ENCODE measurements at regions of chr18 and their contacts with region 1.

Region 1: DNA sequence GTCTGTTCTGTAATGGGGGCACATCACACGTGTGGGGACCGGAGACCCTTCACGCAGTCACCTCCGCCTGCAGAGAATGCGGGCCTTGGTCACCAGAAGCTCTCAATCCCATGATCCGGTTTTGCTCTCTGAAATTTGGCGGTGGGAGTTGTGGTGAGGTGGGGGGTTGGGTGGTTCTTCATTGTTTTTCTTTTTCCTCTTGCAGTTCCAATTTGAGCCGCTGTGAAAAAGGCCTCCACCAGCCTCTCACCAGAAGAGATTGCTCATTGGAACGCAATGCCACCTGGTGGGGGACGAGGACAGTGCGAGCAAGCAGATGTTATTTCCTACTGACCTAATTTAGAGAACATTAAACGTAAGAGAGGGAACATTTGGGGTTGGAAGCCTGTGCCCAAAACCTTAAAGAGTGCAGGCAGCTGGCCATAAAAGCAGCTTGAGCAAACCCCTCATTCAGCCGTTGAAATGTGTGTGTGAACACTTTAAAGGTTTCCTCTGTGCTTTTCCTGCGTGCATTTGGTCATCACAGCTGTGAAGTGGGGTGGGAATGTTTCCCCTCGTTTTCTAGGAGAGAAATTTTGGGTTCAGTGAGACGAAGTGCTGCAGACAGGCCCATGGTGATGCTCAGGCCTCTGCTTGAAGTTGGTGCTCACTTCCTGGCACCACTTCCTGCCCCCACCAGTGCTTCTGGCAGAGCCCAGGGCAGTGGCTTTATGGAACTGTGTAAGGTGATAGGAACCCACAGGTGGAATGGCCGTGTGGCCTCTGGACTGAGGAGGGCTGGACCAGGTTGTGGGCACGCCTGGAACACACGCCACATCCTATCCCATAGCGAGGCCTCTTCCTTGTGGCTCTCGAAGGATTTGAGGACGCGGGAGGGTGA is 61.7 kb downstream of the ZCCHC2 start:
- DNase-seq: peak; percentile 88
- H3K4me3 Mint-ChIP-seq: no peak overlapping the region
- H3K27ac Mint-ChIP-seq: peak overlapping the region; percentile 65
- H3K4me1 Mint-ChIP-seq: peaks cover 8% of the 10 kb centered on the region
- H3K27me3 Mint-ChIP-seq: no peaks in the 10 kb centered on the region
- CTCF ChIP-seq: peak; percentile 82

Region 2: GRCh38 chr18:61926532-61926931 is 657.9 kb before region 1 on chr18:
- CTCF ChIA-PET with region 1: no interaction called
- POLR2A ChIA-PET with region 1: no interaction called
- intact Hi-C with region 1: no loop called
- DNase-seq: no peak
- H3K4me3 Mint-ChIP-seq: no peak overlapping the region
- H3K27ac Mint-ChIP-seq: no peak overlapping the region
- H3K4me1 Mint-ChIP-seq: no peaks in the 10 kb centered on the region
- H3K27me3 Mint-ChIP-seq: no peaks in the 10 kb centered on the region
- CTCF ChIP-seq: no peak

Region 3: DNA sequence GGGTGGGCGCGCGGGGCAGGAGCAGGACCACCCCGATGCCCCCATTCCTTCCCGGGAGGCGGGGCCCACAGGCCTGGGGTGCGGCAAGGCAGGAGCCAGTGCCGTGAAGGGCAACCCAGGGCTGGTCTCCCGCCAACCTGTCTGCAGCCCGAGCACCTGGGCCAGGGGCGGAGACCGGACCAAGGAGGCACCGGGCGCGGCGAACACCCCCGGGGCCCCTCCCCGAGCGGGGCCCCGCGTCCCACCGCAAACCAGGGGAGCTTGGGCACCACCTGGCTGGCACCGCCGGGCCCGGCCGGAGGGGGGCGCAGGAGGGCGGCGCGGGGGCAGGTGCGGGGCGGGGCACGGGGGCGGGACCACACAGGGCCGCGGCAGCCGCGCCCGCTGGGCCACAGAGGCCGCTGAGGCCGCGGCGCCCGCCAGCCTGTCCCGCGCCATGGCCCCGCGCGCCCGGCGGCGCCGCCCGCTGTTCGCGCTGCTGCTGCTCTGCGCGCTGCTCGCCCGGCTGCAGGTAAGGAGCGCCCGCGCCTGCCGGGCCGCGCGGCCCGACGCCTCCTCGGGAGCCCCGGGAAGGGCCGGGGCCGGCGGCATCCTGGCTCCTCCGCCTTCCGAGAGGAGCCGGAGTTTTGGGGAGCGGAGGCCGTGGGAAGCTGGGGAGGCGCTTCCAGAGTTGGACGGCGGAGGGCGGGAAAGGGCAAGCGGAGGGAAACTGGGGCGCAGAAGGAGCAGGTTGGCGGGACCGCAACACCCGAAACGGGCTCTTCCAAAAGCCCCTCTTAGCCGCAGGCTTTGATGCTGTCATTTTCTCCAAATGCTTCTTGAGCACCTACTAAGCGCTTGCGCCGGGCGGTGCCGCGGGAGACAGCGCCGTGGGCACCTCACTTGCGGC is 259.3 kb before region 1 on chr18 and contains the start of gene TNFRSF11A:
- CTCF ChIA-PET with region 1: interaction called, 12 read pairs
- POLR2A ChIA-PET with region 1: interaction called, 4 read pairs
- intact Hi-C with region 1: loop called (anchors 1 kb)
- DNase-seq: peak; percentile 61
- H3K4me3 Mint-ChIP-seq: peak within 1 kb of the TSS; percentile 75
- H3K27ac Mint-ChIP-seq: no peak within 1 kb of the TSS
- H3K4me1 Mint-ChIP-seq: peaks cover 18% of the 10 kb centered on the region
- H3K27me3 Mint-ChIP-seq: peaks cover 30% of the 10 kb centered on the region
- CTCF ChIP-seq: peak; percentile 52
- total RNA-seq, gene TNFRSF11A: 2.3 and 3.0 TPM in 2 replicates

Region 4: DNA sequence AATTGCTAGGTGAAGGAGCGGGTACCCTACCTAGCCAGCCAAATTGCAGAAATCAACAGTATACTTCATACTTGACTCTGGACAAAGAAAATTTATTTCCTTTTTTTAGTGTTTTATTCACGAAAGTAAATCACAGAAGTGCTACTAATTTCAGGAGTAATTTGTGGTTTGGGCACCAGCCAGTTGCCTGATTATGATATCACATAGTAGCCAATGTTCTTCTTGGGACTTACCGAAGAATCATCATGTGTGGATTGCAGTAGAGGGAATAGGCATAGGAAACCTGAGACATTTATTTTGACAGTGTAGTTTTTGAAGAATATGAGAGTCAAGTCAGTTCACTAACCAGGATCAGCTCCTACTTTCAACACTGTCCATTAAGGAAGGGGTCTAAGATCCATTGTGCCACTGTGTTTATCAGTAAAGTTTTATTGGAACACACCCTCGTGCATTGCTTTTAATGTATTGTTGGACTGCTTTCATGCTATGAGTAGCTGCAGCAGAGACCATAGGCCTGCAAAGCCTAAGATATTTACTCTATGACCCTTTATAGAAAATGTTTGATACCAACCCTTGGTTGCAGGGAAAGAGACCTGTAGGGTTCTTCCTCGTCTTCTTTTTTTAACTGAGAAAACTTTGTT is 227.3 kb before region 1 on chr18:
- CTCF ChIA-PET with region 1: no interaction called
- POLR2A ChIA-PET with region 1: no interaction called
- intact Hi-C with region 1: no loop called
- DNase-seq: no peak
- H3K4me3 Mint-ChIP-seq: no peak overlapping the region
- H3K27ac Mint-ChIP-seq: no peak overlapping the region
- H3K4me1 Mint-ChIP-seq: no peaks in the 10 kb centered on the region
- H3K27me3 Mint-ChIP-seq: no peaks in the 10 kb centered on the region
- CTCF ChIP-seq: no peak

Region 5: GRCh38 chr18:62537946-62538345 is 46.5 kb before region 1 on chr18:
- CTCF ChIA-PET with region 1: interaction called, 13 read pairs
- POLR2A ChIA-PET with region 1: interaction called, 4 read pairs
- intact Hi-C with region 1: no loop called
- DNase-seq: peak; percentile 63
- H3K4me3 Mint-ChIP-seq: no peak overlapping the region
- H3K27ac Mint-ChIP-seq: no peak overlapping the region
- H3K4me1 Mint-ChIP-seq: no peaks in the 10 kb centered on the region
- H3K27me3 Mint-ChIP-seq: no peaks in the 10 kb centered on the region
- CTCF ChIP-seq: no peak

Region 6: GRCh38 chr18:62697636-62698035 is 113.2 kb after region 1 on chr18:
- CTCF ChIA-PET with region 1: interaction called, 19 read pairs
- POLR2A ChIA-PET with region 1: no interaction called
- intact Hi-C with region 1: no loop called
- DNase-seq: no peak
- H3K4me3 Mint-ChIP-seq: no peak overlapping the region
- H3K27ac Mint-ChIP-seq: no peak overlapping the region
- H3K4me1 Mint-ChIP-seq: no peaks in the 10 kb centered on the region
- H3K27me3 Mint-ChIP-seq: no peaks in the 10 kb centered on the region
- CTCF ChIP-seq: no peak

Region 7: GRCh38 chr18:62862466-62862865 is 278.0 kb after region 1 on chr18:
- CTCF ChIA-PET with region 1: no interaction called
- POLR2A ChIA-PET with region 1: no interaction called
- intact Hi-C with region 1: no loop called
- DNase-seq: no peak
- H3K4me3 Mint-ChIP-seq: no peak overlapping the region
- H3K27ac Mint-ChIP-seq: no peak overlapping the region
- H3K4me1 Mint-ChIP-seq: no peaks in the 10 kb centered on the region
- H3K27me3 Mint-ChIP-seq: no peaks in the 10 kb centered on the region
- CTCF ChIP-seq: no peak

Region 8: GRCh38 chr18:62919109-62919838 is 334.8 kb after region 1 on chr18:
- CTCF ChIA-PET with region 1: interaction called, 10 read pairs
- POLR2A ChIA-PET with region 1: no interaction called
- intact Hi-C with region 1: no loop called
- DNase-seq: no peak
- H3K4me3 Mint-ChIP-seq: no peak overlapping the region
- H3K27ac Mint-ChIP-seq: peak overlapping the region; percentile 31
- H3K4me1 Mint-ChIP-seq: no peaks in the 10 kb centered on the region
- H3K27me3 Mint-ChIP-seq: no peaks in the 10 kb centered on the region
- CTCF ChIP-seq: no peak

Region 9: GRCh38 chr18:62999392-62999791 is 414.9 kb after region 1 on chr18:
- CTCF ChIA-PET with region 1: interaction called, 12 read pairs
- POLR2A ChIA-PET with region 1: no interaction called
- intact Hi-C with region 1: no loop called
- DNase-seq: peak; percentile 23
- H3K4me3 Mint-ChIP-seq: no peak overlapping the region
- H3K27ac Mint-ChIP-seq: no peak overlapping the region
- H3K4me1 Mint-ChIP-seq: peaks cover 14% of the 10 kb centered on the region
- H3K27me3 Mint-ChIP-seq: peaks cover 21% of the 10 kb centered on the region
- CTCF ChIP-seq: no peak